PC-3 (cell line): ENCODE measurements at regions of chr1 and their contacts with region 1.

Region 1: GRCh38 chr1:117758444-117759316 is 152.8 kb downstream of the TENT5C start:
- DNase-seq: peak; percentile 96
- ATAC-seq: peak; percentile 94
- H3K4me3 ChIP-seq: peak overlapping the region; percentile 68
- H3K27ac ChIP-seq: peak overlapping the region; percentile 53
- H3K4me1 ChIP-seq: peaks cover 22% of the 10 kb centered on the region
- H3K27me3 ChIP-seq: no peaks in the 10 kb centered on the region
- CTCF ChIP-seq: peak; percentile 91

Region 2: DNA sequence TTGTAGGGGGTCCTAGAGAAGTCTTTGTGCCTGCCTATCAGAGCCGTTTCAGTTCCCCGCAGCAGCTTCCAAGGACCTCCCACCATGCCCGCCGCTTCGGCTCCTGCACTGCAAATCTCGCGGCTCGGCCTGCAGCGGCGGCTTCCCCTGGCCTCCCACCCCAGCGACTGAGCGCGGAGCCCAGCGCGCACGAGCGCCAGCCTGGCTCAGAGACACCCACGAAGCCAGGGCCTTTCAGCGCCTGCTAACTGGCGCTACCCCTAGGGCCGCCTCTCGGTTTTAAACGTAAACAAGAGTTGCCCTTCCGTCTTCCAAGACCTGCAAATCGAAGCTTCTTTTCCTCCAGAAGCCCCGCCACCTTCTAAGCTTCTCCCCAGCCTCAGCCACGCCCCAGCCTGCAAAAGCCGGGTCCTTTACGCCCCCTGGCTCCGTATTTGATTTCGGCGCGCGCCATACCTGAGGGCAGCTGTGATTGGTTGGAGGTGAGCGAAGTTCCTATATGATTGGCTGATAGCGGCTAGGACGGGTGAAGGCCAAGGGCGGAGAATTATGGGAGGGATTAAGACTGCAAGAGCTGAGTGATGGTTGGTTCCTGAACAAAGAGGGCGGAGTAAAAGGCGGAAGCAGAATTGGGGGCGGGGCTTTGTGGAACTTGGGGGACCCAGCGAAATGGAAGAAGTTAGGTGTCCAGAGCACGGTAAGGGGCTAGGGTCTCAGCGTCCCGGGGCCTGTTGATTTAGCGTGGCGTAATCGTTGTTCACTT is 698.8 kb before region 1 on chr1 and contains the start of gene TTF2:
- CTCF ChIA-PET with region 1: no interaction called
- POLR2A ChIA-PET with region 1: interaction called, 5 read pairs
- intact Hi-C with region 1: loop called (anchors 10 kb)
- DNase-seq: peak; percentile 98
- ATAC-seq: peak; percentile 96
- H3K4me3 ChIP-seq: peak within 1 kb of the TSS; percentile 89
- H3K27ac ChIP-seq: peak within 1 kb of the TSS; percentile 68
- H3K4me1 ChIP-seq: peaks cover 14% of the 10 kb centered on the region
- H3K27me3 ChIP-seq: no peaks in the 10 kb centered on the region
- CTCF ChIP-seq: no peak
- total RNA-seq, gene TTF2: 25.1 and 28.8 TPM in 2 replicates

Region 3: GRCh38 chr1:117512743-117513321 is 245.8 kb before region 1 on chr1:
- CTCF ChIA-PET with region 1: interaction called, 3 read pairs
- POLR2A ChIA-PET with region 1: no interaction called
- intact Hi-C with region 1: loop called (anchors 1 kb)
- DNase-seq: peak; percentile 63
- ATAC-seq: peak; percentile 69
- H3K4me3 ChIP-seq: no peak overlapping the region
- H3K27ac ChIP-seq: no peak overlapping the region
- H3K4me1 ChIP-seq: no peaks in the 10 kb centered on the region
- H3K27me3 ChIP-seq: no peaks in the 10 kb centered on the region
- CTCF ChIP-seq: peak; percentile 83

Region 4: DNA sequence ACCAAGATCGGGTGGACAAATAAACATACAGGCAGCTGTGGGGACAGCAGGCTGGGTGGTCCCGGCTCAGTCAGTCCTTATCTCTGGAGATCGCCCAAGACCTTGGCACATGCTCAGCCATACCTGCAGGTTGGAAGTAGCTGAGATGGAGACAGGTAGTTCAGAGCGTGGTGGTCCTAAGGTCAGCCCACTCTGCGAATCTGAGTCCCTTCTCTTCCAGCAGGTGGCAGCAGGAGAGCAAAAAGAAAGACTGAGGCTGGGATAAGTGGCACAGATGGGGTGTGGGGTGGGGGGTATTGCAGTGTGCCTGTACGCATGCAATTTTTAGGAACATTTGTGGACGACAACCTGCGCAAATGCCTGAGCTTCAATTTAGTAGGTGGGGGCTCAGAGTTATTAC is 48.0 kb before region 1 on chr1:
- CTCF ChIA-PET with region 1: interaction called, 4 read pairs
- POLR2A ChIA-PET with region 1: no interaction called
- intact Hi-C with region 1: loop called (anchors 1 kb)
- DNase-seq: peak; percentile 44
- ATAC-seq: peak; percentile 43; the same call in 1 of the 2 replicates
- H3K4me3 ChIP-seq: no peak overlapping the region
- H3K27ac ChIP-seq: no peak overlapping the region
- H3K4me1 ChIP-seq: no peaks in the 10 kb centered on the region
- H3K27me3 ChIP-seq: no peaks in the 10 kb centered on the region
- CTCF ChIP-seq: peak; percentile 86

Region 5: GRCh38 chr1:117826551-117827078 is 67.9 kb after region 1 on chr1:
- CTCF ChIA-PET with region 1: interaction called, 3 read pairs
- POLR2A ChIA-PET with region 1: no interaction called
- intact Hi-C with region 1: loop called (anchors 2 kb)
- DNase-seq: peak; percentile 97
- ATAC-seq: peak; percentile 81
- H3K4me3 ChIP-seq: peak overlapping the region; percentile 24; the same call in 1 of the 2 replicates
- H3K27ac ChIP-seq: peak overlapping the region; percentile 85
- H3K4me1 ChIP-seq: peaks cover 47% of the 10 kb centered on the region
- H3K27me3 ChIP-seq: no peaks in the 10 kb centered on the region
- CTCF ChIP-seq: no peak

Region 6: GRCh38 chr1:117860896-117861610 is 102.4 kb after region 1 on chr1:
- CTCF ChIA-PET with region 1: no interaction called
- POLR2A ChIA-PET with region 1: no interaction called
- intact Hi-C with region 1: no loop called
- DNase-seq: no peak
- ATAC-seq: no peak
- H3K4me3 ChIP-seq: no peak overlapping the region
- H3K27ac ChIP-seq: no peak overlapping the region
- H3K4me1 ChIP-seq: peaks cover 14% of the 10 kb centered on the region
- H3K27me3 ChIP-seq: no peaks in the 10 kb centered on the region
- CTCF ChIP-seq: no peak

Region 7: GRCh38 chr1:117895482-117896114 is 136.9 kb after region 1 on chr1:
- CTCF ChIA-PET with region 1: no interaction called
- POLR2A ChIA-PET with region 1: no interaction called
- intact Hi-C with region 1: loop called (anchors 1 kb)
- DNase-seq: peak; percentile 89
- ATAC-seq: peak; percentile 77
- H3K4me3 ChIP-seq: no peak overlapping the region
- H3K27ac ChIP-seq: no peak overlapping the region
- H3K4me1 ChIP-seq: no peaks in the 10 kb centered on the region
- H3K27me3 ChIP-seq: no peaks in the 10 kb centered on the region
- CTCF ChIP-seq: peak; percentile 91